ENCODE measurements at regions of chr6 and their contacts with region 1.

Region 1: GRCh38 chr6:156776840-156777576 is at the start of gene ARID1B:
- DNase-seq: peak; percentile 78 to 84
- H3K4me3 ChIP-seq: peak within 1 kb of the TSS; percentile 84 to 97 (median 87)
- H3K27ac ChIP-seq: peak within 1 kb of the TSS; percentile 98 to 100
- H3K4me1 ChIP-seq: peaks cover 0 to 5% of the 10 kb centered on the region in 2 donors
- H3K27me3 ChIP-seq: no peaks in the 10 kb centered on the region
- CTCF ChIP-seq: no peak
- POLR2A ChIP-seq: no peak
- total RNA-seq, gene ARID1B: 99.9 to 205 (median 131) TPM

Region 2: GRCh38 chr6:156087487-156087886 is 689.5 kb before region 1 on chr6:
- intact Hi-C with region 1: no loop called
- DNase-seq: no peak
- H3K4me3 ChIP-seq: no peak overlapping the region
- H3K27ac ChIP-seq: no peak overlapping the region
- H3K4me1 ChIP-seq: no peaks in the 10 kb centered on the region
- H3K27me3 ChIP-seq: no peaks in the 10 kb centered on the region
- CTCF ChIP-seq: no peak
- POLR2A ChIP-seq: no peak

Region 3: DNA sequence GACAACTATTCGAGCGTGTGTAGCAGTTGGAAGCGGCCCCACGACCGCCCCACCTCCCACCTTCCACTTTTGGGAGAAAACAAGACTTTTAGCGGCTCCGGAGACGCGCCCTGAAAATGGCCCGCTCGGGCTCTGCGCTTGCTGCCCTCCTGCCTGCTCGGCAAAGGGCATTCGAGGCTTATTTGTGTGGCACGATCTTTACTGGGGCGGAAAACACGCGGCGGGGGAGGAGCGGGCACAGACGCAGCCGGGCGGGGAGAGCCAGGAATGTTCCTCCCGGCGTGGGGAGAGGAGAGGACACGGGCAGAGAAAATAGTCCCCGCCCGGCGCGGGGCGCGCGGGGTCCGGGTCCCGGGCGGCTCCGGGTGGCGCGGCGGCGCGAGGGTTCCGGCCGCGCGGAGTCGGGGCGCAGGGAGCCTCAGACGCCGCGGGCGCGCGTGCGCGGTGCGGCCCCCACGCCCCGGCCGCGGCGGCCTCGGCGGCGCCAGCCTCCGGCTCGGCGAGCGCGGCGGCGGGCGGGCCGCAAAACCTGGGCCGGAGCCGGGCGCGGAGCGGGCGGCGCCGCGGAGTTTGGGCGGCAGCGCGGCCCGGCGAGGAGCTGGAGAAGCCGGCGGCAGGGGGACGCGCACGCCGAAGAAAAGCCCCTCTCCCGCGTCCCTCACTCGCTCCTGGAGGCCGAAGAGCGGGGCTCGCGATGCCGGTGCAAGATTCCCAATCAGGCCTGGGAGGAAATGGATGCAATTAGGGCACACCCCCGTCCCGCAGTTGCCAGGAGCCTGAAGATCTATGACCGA is 89.8 kb before region 1 on chr6:
- intact Hi-C with region 1: loop called (anchors 5 kb)
- DNase-seq: peak; percentile 90 to 92
- H3K4me3 ChIP-seq: peak overlapping the region; percentile 59 to 82 (median 62)
- H3K27ac ChIP-seq: peak overlapping the region; percentile 95 to 99
- H3K4me1 ChIP-seq: no peaks in the 10 kb centered on the region
- H3K27me3 ChIP-seq: no peaks in the 10 kb centered on the region
- CTCF ChIP-seq: no peak
- POLR2A ChIP-seq: peak; percentile 64

Region 4: DNA sequence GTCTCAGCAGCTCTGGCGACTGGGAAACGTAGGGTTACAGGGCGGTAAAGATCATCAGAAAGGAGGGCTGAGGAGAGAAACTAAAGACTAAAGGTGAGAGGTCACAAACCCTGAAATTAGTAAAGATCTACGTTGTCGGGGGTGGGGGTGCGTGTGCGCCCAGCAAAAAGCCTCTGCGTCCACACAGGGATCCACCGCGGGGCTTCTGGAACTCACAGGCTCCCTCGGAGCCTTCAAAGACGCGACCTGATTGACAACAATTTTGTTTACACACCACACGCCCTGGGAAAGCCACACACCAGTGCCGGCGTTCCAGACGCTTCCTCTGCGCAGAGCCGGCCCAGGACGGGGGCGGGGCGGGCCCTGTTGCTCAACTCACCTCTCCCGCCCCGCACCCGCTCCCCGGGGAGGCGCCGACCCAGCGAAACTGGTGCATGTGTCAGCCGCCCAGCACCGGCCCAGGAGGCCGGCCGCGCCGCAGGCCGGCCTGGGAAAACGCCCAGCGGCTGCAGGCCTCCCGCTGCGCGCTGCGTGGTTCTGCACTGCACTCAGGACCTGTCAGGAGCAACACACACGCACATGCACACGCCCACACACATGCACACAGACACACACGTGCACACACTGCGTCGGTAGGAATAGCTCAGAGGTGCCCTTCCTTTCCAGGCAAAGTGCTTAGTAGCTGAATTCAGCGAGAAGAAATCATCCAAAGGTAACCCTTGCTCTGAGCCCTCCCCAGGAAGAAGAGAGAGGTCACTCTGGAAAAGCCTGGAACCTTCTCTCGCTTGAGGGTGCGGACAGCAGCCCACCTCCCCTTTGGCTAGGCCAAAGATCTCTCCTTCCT is 57.1 kb before region 1 on chr6:
- intact Hi-C with region 1: loop called (anchors 5 kb)
- DNase-seq: peak; percentile 92 to 96
- H3K4me3 ChIP-seq: peak overlapping the region; percentile 35 to 66 (median 46)
- H3K27ac ChIP-seq: peak overlapping the region; percentile 96 to 97
- H3K4me1 ChIP-seq: peaks cover 5 to 16% of the 10 kb centered on the region in 2 donors
- H3K27me3 ChIP-seq: no peaks in the 10 kb centered on the region
- CTCF ChIP-seq: no peak
- POLR2A ChIP-seq: no peak

Region 5: GRCh38 chr6:157021344-157021992 is 244.5 kb after region 1 on chr6:
- intact Hi-C with region 1: loop called (anchors 10 kb)
- DNase-seq: peak; percentile 89 to 95
- H3K4me3 ChIP-seq: peak overlapping the region; percentile 83 to 94 (median 83)
- H3K27ac ChIP-seq: peak overlapping the region; percentile 99
- H3K4me1 ChIP-seq: peaks cover 0 to 8% of the 10 kb centered on the region in 2 donors
- H3K27me3 ChIP-seq: no peaks in the 10 kb centered on the region
- CTCF ChIP-seq: peak in 2 of 3 donors; percentile 31 to 50
- POLR2A ChIP-seq: peak; percentile 87

Measured in breast epithelium (tissue), 4 donors.